ENCODE measurements at regions of chr18 and their contacts with region 1.

Region 1: DNA sequence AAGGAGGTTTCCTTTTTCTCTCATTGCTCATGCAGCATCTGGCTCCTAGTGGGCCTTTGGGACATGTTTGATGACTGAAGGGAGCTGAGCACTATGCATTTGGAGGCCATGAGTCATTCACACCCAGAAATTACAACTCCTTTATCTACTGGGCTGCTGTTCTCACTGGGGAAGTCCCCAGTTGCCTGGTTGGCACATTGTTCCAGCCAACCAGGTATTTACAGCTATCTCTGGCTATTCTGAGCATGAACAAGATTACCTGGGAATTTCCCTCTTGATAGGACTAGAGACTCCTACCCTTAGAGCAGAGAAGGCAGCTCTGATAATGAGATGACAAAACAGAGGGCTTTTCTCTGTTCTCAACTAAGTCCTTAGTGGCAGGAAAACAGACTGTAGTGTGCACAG is 206.5 kb downstream of the SETBP1 start:
- DNase-seq: no peak

Region 2: DNA sequence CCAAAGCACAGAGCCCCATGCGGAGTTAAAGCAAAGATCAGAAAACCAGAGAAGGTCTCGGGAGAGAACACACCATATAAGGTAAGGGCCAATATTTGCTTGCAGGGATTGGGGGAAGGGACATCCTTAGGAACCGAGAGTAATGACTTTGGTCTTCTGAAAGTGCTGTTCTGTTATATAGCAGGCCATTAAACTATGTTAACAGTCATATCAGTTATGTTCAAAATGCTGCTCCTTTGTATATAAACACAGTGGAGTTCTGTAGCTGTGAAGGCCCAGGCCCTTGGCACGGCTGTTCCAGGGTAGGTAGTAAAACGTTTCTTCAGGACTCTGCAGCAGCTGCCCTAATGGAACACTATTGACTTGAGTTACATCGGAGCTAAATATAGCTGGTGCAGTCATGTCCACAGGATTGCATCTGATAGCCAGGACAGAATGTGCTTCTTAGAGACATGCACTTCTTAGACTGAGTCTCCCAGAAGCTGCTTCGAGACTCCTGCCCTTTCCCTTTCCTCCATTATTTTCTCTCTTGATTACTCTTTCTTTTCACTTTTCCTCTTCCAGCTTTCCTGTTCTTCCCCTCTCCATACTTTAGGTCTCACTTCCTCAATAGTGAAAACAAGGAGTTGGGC is 84.1 kb before region 1 on chr18:
- intact Hi-C with region 1: loop called in 1 of 2 experiments (anchors 10 kb)
- DNase-seq: no peak